ENCODE measurements at regions of chr19 and their contacts with region 1.

Region 1: DNA sequence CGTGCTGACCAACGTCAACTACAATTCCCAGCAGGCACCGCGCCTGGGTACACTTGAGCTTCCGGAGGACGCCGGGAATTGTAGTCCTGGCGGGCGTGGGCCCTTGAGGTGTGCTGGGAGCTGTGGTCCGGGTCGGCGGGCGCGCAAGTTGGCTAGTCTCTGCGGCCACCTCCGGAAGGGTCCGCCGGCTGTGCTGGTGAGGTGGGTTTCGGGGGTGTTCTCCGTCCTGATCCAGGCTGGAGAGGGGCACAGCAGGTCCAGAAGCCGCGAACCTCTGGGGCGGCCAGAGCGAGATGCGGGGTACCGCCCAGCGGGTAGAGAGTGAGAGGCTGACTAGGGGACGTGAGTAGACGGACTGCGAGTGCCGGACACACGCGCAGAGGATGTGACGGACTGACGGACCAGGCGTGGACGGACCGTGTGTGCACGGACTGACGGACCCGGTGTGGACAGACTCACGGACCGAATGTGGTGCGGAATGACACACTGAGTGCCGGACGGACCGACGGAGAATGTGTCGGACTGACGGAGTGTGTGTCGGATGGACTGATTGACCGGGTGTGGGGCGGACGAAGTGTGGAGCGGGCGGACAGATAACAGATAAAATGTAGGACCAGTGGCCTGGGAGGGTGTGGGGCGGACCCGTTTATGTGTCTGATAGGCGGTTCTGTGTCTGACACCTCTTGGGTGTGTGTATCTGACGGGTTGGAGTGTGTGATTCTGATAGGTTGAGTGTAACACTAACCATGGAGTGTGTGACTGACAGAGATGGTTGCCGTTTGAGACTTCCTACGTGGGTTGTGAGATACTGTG is at the start of gene ZSCAN22:
- DNase-seq: peak; percentile 98 to 100
- ATAC-seq: peak; percentile 98
- H3K4me3 ChIP-seq: peak within 1 kb of the TSS; percentile 61 to 62
- H3K27ac ChIP-seq: peak within 1 kb of the TSS; percentile 4 to 83
- H3K4me1 ChIP-seq: peaks cover 3 to 5% of the 10 kb centered on the region in 2 donors
- H3K27me3 ChIP-seq: no peaks in the 10 kb centered on the region
- total RNA-seq, gene ZSCAN22: 2.2 to 3.1 TPM

Region 2: GRCh38 chr19:58305065-58305931 is 21.8 kb before region 1 on chr19 and contains the start of gene ERVK3-1:
- intact Hi-C with region 1: loop called in 1 of 2 experiments (anchors 1 kb)
- DNase-seq: peak; percentile 98 to 99
- ATAC-seq: peak; percentile 99
- H3K4me3 ChIP-seq: peak within 1 kb of the TSS; percentile 76 to 85
- H3K27ac ChIP-seq: peak within 1 kb of the TSS; percentile 52 to 66
- H3K4me1 ChIP-seq: peaks cover 0 to 6% of the 10 kb centered on the region in 2 donors
- H3K27me3 ChIP-seq: no peaks in the 10 kb centered on the region
- total RNA-seq, gene ERVK3-1: 33.6 to 34.3 TPM

Region 3: DNA sequence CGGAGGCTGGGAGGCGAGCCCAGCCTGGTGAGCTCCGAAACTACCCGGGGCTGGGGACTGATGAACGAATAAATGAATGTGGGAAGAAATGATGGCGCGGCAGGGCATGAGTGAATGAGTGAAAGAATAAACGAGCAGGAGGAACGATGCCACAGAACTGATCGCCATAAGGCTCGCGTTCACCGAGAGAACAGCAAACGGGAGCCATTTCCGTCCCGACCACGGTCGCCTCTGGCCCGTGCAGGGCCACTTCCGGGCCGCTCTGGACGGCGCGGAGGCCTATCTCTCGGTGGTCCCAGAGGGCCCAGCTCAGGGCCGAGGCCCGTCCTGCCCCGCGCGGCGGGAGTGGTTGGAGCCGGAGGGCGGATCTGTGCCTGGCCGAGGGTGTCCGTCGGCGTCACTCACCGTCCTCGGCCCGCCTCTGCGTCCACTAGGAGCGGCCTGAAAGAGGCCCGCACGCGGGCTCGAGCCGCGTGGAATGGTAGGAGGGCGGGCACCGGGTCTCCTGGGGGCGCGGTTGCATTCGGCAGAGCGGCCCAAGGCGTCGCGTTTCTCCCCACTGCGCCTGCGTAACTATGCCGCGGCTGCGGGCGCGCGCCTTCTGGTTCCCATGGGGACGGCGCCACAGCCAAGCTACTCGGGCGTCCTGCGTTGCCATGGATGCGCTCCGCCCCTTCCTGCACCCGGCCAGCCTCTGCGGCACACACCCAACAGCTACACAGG is 35.3 kb after region 1 on chr19 and contains the start of gene ZNF497:
- intact Hi-C with region 1: loop called (anchors 5 kb)
- DNase-seq: peak; percentile 98 to 99
- ATAC-seq: peak; percentile 97
- H3K4me3 ChIP-seq: peak within 1 kb of the TSS; percentile 42 to 67
- H3K27ac ChIP-seq: peak within 1 kb of the TSS in 1 of 2 donors; percentile 84
- H3K4me1 ChIP-seq: no peaks in the 10 kb centered on the region
- H3K27me3 ChIP-seq: no peaks in the 10 kb centered on the region
- total RNA-seq, gene ZNF497: 0.32 to 0.87 TPM

Region 4: DNA sequence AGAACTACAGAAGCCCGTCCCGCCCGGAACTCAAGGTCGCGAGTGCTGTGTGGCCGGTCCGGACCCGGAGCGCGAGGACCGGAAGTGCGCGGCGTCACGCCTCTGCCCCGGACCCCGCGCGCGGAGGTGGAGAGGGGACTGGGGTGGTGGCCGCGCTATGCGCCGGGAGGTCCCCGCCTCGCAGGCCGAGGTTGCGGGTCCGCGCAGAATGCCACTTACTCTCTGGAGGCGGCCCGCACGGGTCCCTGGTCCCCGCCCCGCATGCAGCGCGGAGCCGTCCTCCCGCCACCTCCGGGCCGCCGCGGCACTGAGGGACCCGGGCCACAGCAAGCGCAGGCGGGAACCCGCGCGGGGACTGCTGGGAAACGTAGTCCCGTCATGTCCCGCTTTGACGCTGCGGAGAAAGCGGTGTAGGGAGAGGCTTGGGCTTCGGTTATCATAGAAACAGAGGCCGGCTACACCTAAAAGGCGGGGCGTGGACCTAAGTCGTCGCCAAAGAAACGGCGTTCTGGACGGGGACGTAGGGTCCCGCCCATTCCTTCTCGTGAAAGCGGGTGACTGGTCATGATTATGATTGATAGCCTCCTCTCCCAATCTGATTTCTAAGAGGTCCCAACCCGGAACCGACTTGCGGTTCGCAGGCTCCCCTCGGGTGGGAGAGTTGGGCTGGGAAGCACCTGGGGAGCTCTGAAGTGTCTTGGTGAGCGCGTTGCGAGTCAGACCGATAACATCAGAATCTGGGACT is 53.8 kb after region 1 on chr19 and contains the start of gene ZNF837:
- intact Hi-C with region 1: loop called in 1 of 2 experiments (anchors 2 kb)
- DNase-seq: peak; percentile 99 to 100
- ATAC-seq: peak; percentile 98
- H3K4me3 ChIP-seq: peak within 1 kb of the TSS; percentile 44 to 45
- H3K27ac ChIP-seq: peak within 1 kb of the TSS in 1 of 2 donors; percentile 91
- H3K4me1 ChIP-seq: peaks cover 0 to 3% of the 10 kb centered on the region in 2 donors
- H3K27me3 ChIP-seq: no peaks in the 10 kb centered on the region
- total RNA-seq, gene ZNF837: 0.65 to 1.8 TPM